ENCODE measurements at regions of chr3 and their contacts with region 1.

Region 1: DNA sequence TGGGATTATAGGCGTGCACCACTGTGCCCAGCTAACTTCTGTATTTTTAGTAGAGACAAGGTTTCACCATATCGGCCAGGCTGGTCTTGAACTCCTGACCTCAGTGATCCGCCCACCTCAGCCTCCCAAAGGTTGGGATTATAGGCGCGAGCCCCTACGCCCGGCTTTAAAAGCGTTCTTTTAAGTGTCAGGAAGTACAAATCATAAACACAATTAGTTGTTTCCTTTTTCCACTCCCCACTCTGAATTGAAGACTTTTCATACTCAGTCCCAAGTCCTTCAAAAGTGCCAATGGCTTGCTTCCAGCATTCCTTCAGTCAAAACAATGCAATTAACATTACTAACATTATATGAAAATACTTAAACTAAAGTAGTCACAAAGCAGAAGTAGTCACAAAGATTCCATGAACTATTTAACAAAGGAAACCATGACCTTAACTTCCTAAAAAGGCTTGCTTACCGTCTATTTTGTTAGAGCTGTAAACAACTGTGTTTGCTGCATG is 8.1 kb downstream of the WDR82 start:
- DNase-seq: no peak
- ATAC-seq: no peak
- H3K4me3 Mint-ChIP-seq: peak overlapping the region; percentile 84
- H3K27ac Mint-ChIP-seq: peak overlapping the region; percentile 96
- H3K4me1 Mint-ChIP-seq: peaks cover 84% of the 10 kb centered on the region
- H3K27me3 Mint-ChIP-seq: no peaks in the 10 kb centered on the region

Region 2: DNA sequence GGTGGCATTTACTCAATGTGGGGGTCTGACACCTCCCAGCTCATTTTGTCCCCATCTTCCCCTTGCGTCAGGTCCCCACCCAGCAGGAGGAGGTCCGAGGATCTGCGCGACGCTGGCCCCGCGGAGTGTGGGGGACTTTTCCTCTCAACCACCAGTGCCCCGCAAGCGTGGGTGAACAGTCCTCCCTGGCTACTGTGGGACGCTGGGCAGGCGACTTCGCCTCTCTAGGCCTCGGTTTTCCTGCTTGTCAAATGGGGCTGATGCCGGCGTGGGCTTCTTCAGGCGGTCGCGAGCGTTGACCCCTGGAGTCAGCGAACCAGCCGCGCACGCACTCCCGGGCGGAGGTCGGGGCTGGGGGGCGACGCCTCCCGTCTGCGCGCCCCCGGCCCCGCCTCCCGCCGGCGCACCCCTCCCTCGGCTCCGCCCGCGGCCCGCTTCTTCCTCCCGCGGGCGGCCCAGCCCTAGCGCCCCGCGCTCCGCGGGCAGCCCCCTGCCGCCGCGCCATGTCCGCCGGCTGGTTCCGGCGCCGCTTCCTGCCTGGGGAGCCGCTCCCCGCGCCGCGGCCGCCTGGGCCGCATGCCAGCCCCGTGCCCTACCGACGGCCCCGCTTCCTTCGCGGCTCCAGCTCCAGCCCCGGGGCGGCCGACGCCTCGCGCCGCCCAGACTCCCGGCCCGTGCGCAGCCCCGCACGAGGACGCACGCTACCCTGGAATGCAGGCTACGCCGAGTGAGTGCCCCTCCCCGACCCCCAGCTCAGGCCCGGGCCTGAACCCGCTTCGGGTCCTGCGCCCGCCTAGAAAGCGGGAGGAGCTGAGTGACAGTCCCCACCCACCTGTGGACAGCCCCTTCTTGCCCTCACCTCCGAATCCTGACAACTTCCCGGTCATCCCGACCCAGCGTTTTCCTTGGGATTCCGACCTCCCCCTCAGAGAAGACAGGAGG is 24.7 kb before region 1 on chr3 and contains the start of gene PPM1M:
- CTCF ChIA-PET with region 1: interaction called, 13 read pairs
- POLR2A ChIA-PET with region 1: interaction called, 400 read pairs
- DNase-seq: peak; percentile 68
- ATAC-seq: peak; percentile 63
- H3K4me3 Mint-ChIP-seq: peak within 1 kb of the TSS; percentile 92
- H3K27ac Mint-ChIP-seq: peak within 1 kb of the TSS; percentile 87
- H3K4me1 Mint-ChIP-seq: peaks cover 83% of the 10 kb centered on the region
- H3K27me3 Mint-ChIP-seq: no peaks in the 10 kb centered on the region
- total RNA-seq, gene PPM1M: 90.7 to 91.9 TPM

Region 3: DNA sequence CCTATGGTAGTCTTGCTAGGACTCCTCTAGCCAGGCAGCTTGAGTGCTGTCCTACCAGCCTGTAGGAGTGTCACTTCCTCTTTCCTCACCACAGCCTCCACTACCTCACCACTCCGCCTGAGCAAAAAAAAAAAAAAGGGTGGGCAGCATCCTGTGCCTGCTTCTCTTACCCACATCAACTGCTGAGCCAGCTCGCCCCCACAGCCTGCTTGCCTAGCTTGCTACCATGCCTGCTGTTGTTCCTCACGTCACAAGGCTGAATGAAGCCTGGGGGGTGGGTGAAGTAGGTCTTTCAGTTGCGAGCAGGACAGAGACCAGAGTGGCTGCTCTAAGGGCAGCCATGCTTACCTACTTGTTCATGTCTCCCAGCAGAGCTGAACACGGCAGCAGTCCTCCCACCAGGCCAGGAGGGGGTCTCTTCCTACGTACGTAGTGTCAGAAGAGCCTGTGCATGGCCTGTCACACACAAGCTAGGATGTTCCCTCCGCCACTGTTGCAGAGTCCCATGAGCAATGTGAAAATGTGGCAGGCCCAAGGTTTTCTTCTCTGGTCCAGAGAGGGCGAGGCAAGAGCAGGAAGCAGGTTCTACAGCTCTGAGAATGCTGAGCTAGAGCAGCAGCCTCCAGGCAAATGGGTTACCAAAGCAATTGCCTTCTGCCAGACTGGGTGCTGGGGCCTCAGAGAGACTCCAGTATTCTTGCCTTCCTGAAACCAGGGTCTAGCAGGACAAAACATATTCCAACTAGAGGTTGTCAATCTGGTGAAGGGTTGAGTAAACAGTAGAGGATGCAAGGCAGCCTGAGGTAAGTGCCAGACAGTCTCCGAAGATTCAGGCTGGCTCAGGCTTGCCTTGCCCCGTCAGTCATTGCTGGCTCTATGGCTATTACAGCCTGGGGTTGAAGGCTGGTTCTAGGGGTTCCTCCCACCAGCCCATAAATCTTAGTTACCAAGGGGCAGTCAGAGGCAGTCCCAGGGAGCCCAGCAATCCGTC is 16.7 kb before region 1 on chr3:
- CTCF ChIA-PET with region 1: interaction called, 44 read pairs
- POLR2A ChIA-PET with region 1: interaction called, 400 read pairs
- DNase-seq: peak; percentile 90
- ATAC-seq: peak; percentile 88
- H3K4me3 Mint-ChIP-seq: peak overlapping the region; percentile 77
- H3K27ac Mint-ChIP-seq: peak overlapping the region; percentile 99
- H3K4me1 Mint-ChIP-seq: peaks cover 95% of the 10 kb centered on the region
- H3K27me3 Mint-ChIP-seq: no peaks in the 10 kb centered on the region

Region 4: GRCh38 chr3:52259035-52259434 is 11.3 kb before region 1 on chr3:
- CTCF ChIA-PET with region 1: interaction called, 44 read pairs
- POLR2A ChIA-PET with region 1: interaction called, 400 read pairs
- DNase-seq: no peak
- ATAC-seq: no peak
- H3K4me3 Mint-ChIP-seq: no peak overlapping the region
- H3K27ac Mint-ChIP-seq: peak overlapping the region; percentile 8
- H3K4me1 Mint-ChIP-seq: peaks cover 88% of the 10 kb centered on the region
- H3K27me3 Mint-ChIP-seq: no peaks in the 10 kb centered on the region